Esophagus muscularis mucosa (tissue), 4 donors: ENCODE measurements at regions of chr1 and their contacts with region 1.

Region 1: DNA sequence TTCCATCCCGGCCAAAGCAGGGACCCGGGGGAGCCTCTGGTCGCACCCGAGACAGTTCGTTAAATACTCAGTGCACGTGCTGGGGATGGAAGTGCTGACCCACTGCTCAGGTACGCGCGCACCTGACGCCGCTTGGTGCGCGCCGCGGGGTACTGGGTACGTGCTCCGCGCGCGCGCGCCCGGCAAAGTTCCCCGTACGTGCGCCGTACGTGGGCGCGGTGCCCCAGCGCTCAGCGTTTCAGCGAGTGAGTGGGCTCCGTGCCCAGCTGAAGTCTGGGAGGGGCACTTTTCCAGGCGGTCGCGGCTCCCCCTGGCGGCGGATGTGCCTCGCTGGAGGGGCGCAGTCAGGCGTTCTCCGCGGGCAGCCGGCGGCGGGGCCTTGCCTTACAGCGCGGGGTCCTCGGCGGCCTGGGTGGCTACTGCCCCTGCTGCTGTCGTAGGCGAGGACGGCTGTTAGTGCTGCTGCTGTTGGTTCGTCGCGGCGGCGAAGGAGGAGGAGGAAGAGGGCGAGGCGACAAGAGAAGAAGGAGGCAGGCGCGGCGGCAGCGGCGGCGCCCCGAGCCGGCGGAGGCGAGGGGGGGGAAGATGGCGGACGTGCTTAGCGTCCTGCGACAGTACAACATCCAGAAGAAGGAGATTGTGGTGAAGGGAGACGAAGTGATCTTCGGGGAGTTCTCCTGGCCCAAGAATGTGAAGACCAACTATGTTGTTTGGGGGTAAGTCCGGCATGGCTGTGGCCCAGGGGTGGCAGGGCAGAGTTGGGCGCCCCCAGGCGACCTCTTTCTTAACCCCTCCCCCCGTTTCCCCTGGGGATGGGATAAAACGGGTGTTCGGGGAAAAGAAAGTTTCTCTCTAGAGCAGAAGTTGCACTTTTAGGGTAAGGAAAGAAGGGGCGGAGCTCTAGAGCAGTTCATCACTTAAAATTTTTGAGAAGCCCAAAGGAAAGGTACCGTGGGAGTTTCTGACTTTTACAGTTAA is at the start of gene CDC73:
- DNase-seq: peak; percentile 99
- H3K4me3 ChIP-seq: peak within 1 kb of the TSS; percentile 81 to 91 (median 82)
- H3K27ac ChIP-seq: peak within 1 kb of the TSS; percentile 94 to 97 (median 96)
- H3K4me1 ChIP-seq: peaks cover 29 to 43% (median 41%) of the 10 kb centered on the region in 4 donors
- H3K27me3 ChIP-seq: no peaks in the 10 kb centered on the region
- CTCF ChIP-seq: peak; percentile 89 to 91 (median 91)
- EP300 ChIP-seq: no peak
- POLR2A ChIP-seq: peak; percentile 66
- total RNA-seq, gene CDC73: 45.4 to 66.9 (median 46.0) TPM

Region 2: DNA sequence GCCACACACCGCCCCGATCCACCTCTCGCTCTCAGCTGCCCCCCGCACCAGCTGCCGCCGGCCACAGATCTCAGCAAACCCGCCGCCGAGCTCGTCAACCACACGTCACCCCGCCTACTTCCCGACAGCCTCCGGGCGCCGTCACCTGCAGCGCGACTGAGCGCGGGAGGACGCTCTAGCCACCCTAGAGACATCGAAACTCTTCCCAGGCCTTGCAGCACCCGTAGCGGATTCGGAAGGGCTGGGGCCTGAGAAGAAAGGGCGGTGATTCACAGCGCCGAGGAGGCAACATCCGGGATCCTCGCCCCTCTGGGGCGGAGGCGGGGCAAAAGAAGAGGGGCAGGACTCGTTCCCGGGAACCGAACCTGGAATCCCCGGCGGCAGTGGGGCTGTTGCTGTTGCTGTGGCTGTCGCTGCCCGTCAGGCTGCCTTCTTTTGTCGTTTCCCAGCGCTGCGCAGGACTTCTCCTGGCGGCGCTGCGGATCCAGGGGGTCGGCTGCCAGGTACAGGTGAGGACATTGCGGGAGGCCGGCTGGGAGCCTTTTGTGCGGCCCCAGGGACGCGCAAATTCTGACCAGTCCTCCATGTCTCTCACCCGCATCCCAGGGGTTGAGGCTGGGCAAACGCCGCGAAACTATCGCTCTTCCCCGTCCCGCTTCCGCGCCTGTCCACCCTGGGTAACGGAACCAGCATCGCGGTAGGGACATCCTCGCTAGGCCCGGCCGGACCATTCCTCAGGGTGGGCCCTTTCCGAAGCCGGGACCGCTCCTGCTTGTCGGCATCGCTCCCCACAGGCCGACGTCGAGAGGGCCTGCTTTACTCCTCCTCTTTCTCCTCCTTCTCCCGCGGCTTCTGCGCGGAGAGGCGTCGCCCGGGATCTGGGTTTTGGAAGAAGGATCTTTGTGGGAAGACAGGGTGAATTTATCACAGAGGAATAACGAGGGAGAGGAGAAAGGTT is 62.4 kb before region 1 on chr1 and contains the starts of genes RO60 and UCHL5:
- intact Hi-C with region 1: loop called (anchors 2 kb)
- DNase-seq: peak; percentile 98
- H3K4me3 ChIP-seq: peak within 1 kb of the TSS; percentile 73 to 87 (median 84)
- H3K27ac ChIP-seq: peak within 1 kb of the TSS; percentile 97 to 98 (median 98)
- H3K4me1 ChIP-seq: peaks cover 26 to 58% (median 49%) of the 10 kb centered on the region in 4 donors
- H3K27me3 ChIP-seq: no peaks in the 10 kb centered on the region
- CTCF ChIP-seq: peak in 1 of 3 experiments; percentile 35
- EP300 ChIP-seq: no peak
- POLR2A ChIP-seq: peak; percentile 55
- total RNA-seq, gene RO60: 112 to 277 (median 168) TPM
- total RNA-seq, gene UCHL5: 24.0 to 33.8 (median 28.8) TPM

Region 3: DNA sequence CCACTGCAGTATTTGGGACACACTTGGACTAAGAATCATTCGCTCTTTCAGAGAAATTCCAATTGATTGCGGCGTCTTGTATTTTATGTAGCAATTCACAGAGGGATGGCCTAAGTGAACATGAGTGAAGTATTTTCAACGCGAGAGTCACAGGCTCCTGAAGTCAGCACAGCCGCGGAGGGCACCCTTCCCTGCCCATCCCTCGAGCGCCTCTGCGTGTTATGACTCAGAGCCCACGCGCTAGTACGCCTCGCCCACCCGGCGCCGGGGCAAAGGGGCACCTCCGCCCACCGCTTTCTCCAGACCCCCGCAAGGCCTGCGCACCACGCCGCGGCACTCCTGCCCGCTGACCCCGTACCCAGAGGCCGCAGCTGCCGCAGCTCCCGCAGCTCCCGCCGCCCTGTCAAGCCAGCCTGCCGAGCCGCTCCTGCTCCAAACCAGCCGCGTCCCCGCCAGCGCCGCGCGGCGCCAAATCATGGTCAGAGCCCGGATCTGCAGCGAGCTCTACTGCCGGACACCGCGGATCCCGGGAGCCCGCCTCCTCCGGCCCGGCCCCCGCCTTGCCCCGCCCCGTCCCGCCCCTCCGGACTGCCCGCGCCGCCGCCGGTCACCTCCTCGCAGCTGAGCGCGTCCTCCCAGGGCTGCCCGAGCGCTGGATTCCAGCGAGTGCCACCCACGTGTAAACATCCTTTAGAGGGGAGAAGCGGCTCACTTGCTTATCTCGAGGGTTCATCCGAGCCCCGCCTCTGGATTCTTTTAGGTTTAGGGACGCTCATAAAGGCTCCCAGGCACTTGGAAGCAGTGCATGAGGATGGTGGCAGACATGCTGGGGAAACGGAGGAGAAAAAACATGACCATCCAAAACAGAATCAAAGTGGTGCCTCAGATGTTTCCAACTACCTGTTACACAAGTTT is 16.7 kb before region 1 on chr1 and contains the start of gene GLRX2:
- intact Hi-C with region 1: loop called (anchors 1 kb)
- DNase-seq: peak; percentile 96
- H3K4me3 ChIP-seq: peak within 1 kb of the TSS; percentile 72 to 88 (median 81)
- H3K27ac ChIP-seq: peak within 1 kb of the TSS; percentile 91 to 96 (median 92)
- H3K4me1 ChIP-seq: peaks cover 17 to 28% (median 22%) of the 10 kb centered on the region in 4 donors
- H3K27me3 ChIP-seq: no peaks in the 10 kb centered on the region
- CTCF ChIP-seq: peak in 1 of 3 experiments; percentile 36
- EP300 ChIP-seq: no peak
- POLR2A ChIP-seq: peak; percentile 42
- total RNA-seq, gene GLRX2: 8.1 to 12.1 (median 10.0) TPM